ENCODE measurements at regions of chr12 and their contacts with region 1.

Region 1: GRCh38 chr12:15931590-15932053 is 20.5 kb downstream of the DERA start:
- DNase-seq: peak; percentile 76
- ATAC-seq: peak; percentile 99
- H3K4me3 ChIP-seq: no peak overlapping the region
- H3K4me3 Mint-ChIP-seq: peak overlapping the region; percentile 48
- H3K27ac ChIP-seq: no peak overlapping the region
- H3K27ac Mint-ChIP-seq: peak overlapping the region; percentile 78
- H3K4me1 ChIP-seq: peaks cover 11 to 13% of the 10 kb centered on the region in 2 donors
- H3K4me1 Mint-ChIP-seq: peaks cover 18% of the 10 kb centered on the region
- H3K27me3 ChIP-seq: no peaks in the 10 kb centered on the region
- H3K27me3 Mint-ChIP-seq: no peaks in the 10 kb centered on the region
- CTCF ChIP-seq: peak; percentile 56

Region 2: DNA sequence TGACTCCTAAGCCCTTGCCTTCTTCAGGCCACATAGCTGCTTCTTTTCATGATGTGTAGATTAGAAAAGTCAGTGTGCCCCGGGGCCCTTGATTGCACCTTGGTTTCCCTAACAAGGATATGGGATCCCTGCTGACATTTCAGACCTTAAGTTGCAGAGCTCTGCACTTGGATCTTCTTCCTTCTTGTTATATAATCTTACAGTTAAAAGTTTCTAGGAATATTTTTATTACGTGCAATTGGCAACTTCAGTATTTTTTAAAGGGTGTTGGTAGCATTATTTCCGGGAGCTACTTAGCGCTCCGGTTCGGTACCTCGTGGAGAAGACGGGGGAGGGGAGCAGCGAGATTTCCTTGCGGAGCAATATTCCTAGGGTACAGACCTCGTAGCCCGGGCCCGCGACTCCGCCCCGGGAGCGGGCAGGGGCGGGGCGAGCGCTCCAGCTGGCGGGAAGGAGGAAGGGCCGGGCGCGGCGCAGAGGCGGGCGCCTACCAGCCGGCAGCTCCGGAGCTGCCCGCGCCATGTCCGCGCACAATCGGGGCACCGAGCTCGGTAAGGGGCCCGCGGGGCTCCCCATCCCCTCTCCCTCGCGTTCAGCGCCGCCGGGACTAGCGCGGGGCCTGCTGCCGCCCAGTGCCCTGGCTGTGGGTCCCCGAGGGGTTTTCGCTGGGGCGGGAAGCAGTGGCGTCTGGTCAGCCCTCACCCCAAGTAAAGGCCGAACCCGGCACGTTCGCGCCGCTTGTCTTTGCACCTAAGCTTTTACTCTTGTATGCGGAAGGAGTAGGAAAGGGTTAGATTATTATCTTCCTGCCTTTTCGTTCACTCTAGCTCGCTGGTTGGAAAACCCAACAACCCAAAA is 20.5 kb before region 1 on chr12 and contains the start of gene DERA:
- CTCF ChIA-PET with region 1: interaction called, 3 read pairs
- POLR2A ChIA-PET with region 1: no interaction called
- intact Hi-C with region 1: loop called (anchors 2 kb)
- DNase-seq: peak; percentile 75
- ATAC-seq: peak; percentile 95
- H3K4me3 ChIP-seq: peak within 1 kb of the TSS; percentile 74 to 98 (median 88)
- H3K4me3 Mint-ChIP-seq: peak within 1 kb of the TSS; percentile 93
- H3K27ac ChIP-seq: peak within 1 kb of the TSS; percentile 79 to 88
- H3K27ac Mint-ChIP-seq: peak within 1 kb of the TSS; percentile 92
- H3K4me1 ChIP-seq: peaks cover 6 to 10% of the 10 kb centered on the region in 2 donors
- H3K4me1 Mint-ChIP-seq: peaks cover 19% of the 10 kb centered on the region
- H3K27me3 ChIP-seq: no peaks in the 10 kb centered on the region
- H3K27me3 Mint-ChIP-seq: no peaks in the 10 kb centered on the region
- CTCF ChIP-seq: no peak
- total RNA-seq, gene DERA: 20.5 and 21.6 TPM in 2 replicates